ENCODE measurements at regions of chr18 and their contacts with region 1.

Region 1: GRCh38 chr18:55433648-55434047 is 154.3 kb downstream of the TCF4 start:
- DNase-seq: no peak
- ATAC-seq: no peak
- H3K4me3 ChIP-seq: no peak overlapping the region
- H3K4me3 Mint-ChIP-seq: no peak overlapping the region
- H3K27ac ChIP-seq: no peak overlapping the region
- H3K27ac Mint-ChIP-seq: no peak overlapping the region
- H3K4me1 ChIP-seq: no peaks in the 10 kb centered on the region
- H3K4me1 Mint-ChIP-seq: peaks cover 0 to 4% (median 0%) of the 10 kb centered on the region in 7 donors
- H3K27me3 ChIP-seq: no peaks in the 10 kb centered on the region
- H3K27me3 Mint-ChIP-seq: peaks cover 0 to 6% (median 0%) of the 10 kb centered on the region in 5 donors

Region 2: DNA sequence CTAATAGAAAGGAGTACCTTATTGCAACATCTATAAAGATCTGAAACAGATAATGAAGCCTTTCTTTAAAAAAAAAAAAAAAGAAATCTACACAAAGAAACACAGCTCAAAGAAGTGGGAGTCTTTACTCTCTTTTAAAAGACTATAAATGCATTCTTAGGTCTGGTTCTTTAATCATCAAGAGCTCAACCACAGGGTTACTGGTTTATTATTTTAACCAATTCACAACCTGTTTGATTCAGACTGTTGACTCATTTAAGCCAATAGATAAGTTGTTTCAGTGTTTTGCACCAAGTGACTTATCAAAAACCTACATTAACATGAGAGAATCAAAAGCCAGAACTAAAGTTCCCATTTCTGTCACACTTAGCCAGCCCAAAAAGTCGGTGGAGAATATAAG is 61.3 kb after region 1 on chr18:
- CTCF ChIA-PET with region 1: no interaction called
- POLR2A ChIA-PET with region 1: no interaction called
- intact Hi-C with region 1: loop called in 1 of 2 experiments (anchors 10 kb)
- DNase-seq: no peak
- ATAC-seq: no peak
- H3K4me3 ChIP-seq: no peak overlapping the region
- H3K4me3 Mint-ChIP-seq: no peak overlapping the region
- H3K27ac ChIP-seq: no peak overlapping the region
- H3K27ac Mint-ChIP-seq: no peak overlapping the region
- H3K4me1 ChIP-seq: no peaks in the 10 kb centered on the region
- H3K4me1 Mint-ChIP-seq: peaks cover 0 to under 1% (median under 1%) of the 10 kb centered on the region in 7 donors
- H3K27me3 ChIP-seq: no peaks in the 10 kb centered on the region
- H3K27me3 Mint-ChIP-seq: peaks cover 7 to 23% (median 17%) of the 10 kb centered on the region in 5 donors

Measured in naive thymus-derived CD4-positive, alpha-beta T cell (primary cell).